A549 (cell line): ENCODE measurements at regions of chr9 and their contacts with region 1.

Region 1: GRCh38 chr9:27529316-27530278 is at the start of gene MOB3B:
- DNase-seq: peak; percentile 65 to 76
- ATAC-seq: peak; percentile 89 to 96
- H3K4me3 ChIP-seq: peak within 1 kb of the TSS; percentile 70
- H3K27ac ChIP-seq: peak within 1 kb of the TSS; percentile 74 to 86
- H3K4me1 ChIP-seq: peaks cover 3% of the 10 kb centered on the region; the same call in 1 of the 3 replicates
- CTCF ChIP-seq: peak; percentile 74
- EP300 ChIP-seq: no peak
- POLR2A ChIP-seq: peak; percentile 14; the same call in 1 of the 2 replicates
- RAD21 ChIP-seq: peak; percentile 64 to 82
- polyA plus RNA-seq, gene MOB3B: 5.2 and 6.0 TPM in 2 replicates

Region 2: DNA sequence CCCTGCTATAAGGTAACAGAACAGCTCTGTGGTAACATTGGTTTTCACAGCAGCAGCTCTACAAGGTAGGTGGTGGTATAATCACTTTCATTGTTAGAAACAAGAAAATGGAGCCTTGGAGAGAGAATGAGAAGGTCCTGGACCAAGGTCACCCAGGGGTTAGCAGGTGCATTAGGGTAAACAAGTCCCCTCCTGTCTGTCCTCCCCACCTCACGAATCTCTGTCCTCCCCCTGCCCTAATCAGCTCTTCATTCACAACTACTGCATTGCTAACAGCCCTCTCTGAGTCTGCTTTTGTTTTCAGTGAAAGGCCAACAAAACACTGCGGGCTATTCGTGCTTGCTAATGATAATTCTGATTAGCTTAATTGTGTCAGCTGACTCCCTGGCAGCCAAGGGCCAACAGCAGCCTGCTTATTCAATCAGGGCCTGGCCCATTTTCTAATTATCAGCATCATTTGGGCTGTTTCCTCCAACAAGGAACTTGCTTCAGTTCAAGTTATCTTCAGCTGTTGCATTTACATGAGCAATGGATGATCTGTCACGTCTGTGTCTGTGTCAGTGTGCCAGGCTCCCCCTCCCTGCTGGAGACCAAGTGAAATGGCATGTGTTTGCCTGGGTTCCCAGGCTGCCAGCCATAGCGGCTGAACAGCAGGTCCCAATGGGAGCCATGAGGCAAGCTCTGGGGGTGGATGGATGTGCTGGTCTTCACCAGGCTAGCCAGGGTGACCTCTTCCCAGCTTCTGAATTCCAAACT is 175.9 kb before region 1 on chr9:
- CTCF ChIA-PET with region 1: interaction called, 14 read pairs
- POLR2A ChIA-PET with region 1: no interaction called
- DNase-seq: no peak
- ATAC-seq: peak in 1 of 2 experiments; percentile 71; a peak in 3 of 6 replicates
- H3K4me3 ChIP-seq: no peak overlapping the region
- H3K27ac ChIP-seq: no peak overlapping the region
- H3K4me1 ChIP-seq: no peaks in the 10 kb centered on the region
- CTCF ChIP-seq: no peak
- EP300 ChIP-seq: no peak
- POLR2A ChIP-seq: no peak
- RAD21 ChIP-seq: no peak

Region 3: GRCh38 chr9:27407986-27408385 is 121.6 kb before region 1 on chr9:
- CTCF ChIA-PET with region 1: interaction called, 15 read pairs
- POLR2A ChIA-PET with region 1: interaction called, 3 read pairs
- DNase-seq: peak in 1 of 2 experiments; percentile 50
- ATAC-seq: peak; percentile 82 to 87
- H3K4me3 ChIP-seq: no peak overlapping the region
- H3K27ac ChIP-seq: peak overlapping the region; percentile 60 to 81
- H3K4me1 ChIP-seq: peaks cover 26% of the 10 kb centered on the region
- CTCF ChIP-seq: no peak
- EP300 ChIP-seq: no peak
- POLR2A ChIP-seq: no peak
- RAD21 ChIP-seq: no peak

Region 4: DNA sequence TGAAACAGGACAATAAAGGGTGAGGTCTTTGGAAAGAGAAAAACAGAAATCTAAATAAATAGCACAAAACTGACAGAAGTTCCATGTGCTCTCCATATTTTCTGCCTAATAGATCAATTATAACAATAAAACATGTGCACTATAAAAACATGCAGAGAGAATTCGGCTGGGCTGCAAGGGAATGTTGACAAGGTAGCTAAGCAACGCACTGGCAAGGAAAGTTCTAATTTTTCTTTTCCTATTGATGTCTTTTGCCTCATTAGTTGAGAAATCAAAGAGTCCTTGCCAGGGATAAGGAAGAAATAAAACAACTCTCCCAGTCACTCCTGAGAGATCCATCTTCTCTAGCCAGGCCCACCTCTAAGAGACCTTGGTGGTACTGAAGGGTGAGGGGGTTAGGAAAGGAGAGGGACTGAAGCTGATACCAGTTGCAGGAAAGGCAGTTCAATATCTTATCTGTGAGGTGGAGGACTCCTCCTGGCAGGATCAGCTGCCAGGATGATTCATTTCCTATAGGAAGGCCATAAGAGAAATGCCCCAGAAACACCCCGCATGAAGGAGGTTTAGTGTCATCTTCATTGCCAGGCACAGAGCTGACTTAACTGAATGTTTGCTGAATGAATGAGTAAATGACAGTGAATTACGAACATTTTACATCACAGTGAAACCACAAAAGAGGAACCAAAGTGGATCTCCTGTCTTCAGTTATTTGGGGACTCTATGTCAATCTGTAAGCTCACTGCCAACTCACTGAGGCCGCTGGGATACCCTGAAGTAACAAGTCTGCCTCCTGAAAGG is 69.2 kb before region 1 on chr9:
- CTCF ChIA-PET with region 1: interaction called, 23 read pairs
- POLR2A ChIA-PET with region 1: no interaction called
- DNase-seq: peak; percentile 36 to 63
- ATAC-seq: peak; percentile 80 to 88
- H3K4me3 ChIP-seq: no peak overlapping the region; the same call in 2 of the 3 replicates
- H3K27ac ChIP-seq: peak overlapping the region; percentile 60 to 79
- H3K4me1 ChIP-seq: peaks cover 43% of the 10 kb centered on the region
- CTCF ChIP-seq: no peak
- EP300 ChIP-seq: peak; percentile 21 to 71; a peak in 3 of 5 replicates
- POLR2A ChIP-seq: no peak
- RAD21 ChIP-seq: no peak

Region 5: DNA sequence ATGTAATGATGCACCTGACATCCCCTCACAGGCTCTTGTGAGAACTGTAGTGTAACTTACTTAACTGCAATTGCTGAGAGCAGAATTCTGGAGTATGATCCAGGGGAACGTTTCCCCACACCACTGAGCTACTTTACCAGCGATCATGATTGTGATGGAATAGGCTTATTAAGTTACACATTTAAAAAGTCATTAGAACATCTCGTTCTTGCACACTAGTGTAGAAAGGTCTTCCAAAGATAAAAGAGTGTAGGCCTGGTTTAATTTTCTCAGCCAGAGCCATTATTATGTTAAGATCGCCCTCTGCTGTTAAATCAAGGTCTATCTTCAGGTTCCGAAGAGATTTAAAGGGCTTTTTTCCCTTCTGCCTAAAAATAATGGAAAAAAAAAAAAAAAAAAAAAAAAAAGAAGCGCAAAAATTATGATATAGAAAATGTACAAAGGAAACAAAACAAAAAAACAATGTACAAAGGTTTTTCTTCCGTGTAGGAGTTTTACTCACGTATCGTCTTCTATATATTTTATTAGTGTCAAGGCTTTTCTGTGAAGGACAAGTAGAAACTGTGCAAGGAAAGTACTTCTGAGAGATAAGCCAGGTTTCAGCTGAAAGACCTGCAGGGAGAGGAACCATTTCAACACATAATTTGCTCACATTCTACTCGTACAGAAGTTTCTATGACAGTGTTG is 18.6 kb after region 1 on chr9:
- CTCF ChIA-PET with region 1: interaction called, 66 read pairs
- POLR2A ChIA-PET with region 1: no interaction called
- DNase-seq: peak in 1 of 2 experiments; percentile 45
- ATAC-seq: peak; percentile 74 to 87
- H3K4me3 ChIP-seq: no peak overlapping the region
- H3K27ac ChIP-seq: no peak overlapping the region
- H3K4me1 ChIP-seq: 0 out of 3 replicates have a peak, but pooled peaks cover 4% of the 10 kb centered on the region
- CTCF ChIP-seq: peak; percentile 74
- EP300 ChIP-seq: no peak
- POLR2A ChIP-seq: no peak
- RAD21 ChIP-seq: peak; percentile 77 to 82; a peak in 4 of 5 replicates